ENCODE measurements at regions of chrX and their contacts with region 1.

Region 1: GRCh38 chrX:14039344-14039743 is 9.7 kb upstream of the GEMIN8 start:
- DNase-seq: peak; percentile 23 to 79 (median 45)
- ATAC-seq: peak; percentile 86
- H3K4me3 ChIP-seq: no peak overlapping the region
- H3K4me3 Mint-ChIP-seq: no peak overlapping the region
- H3K27ac ChIP-seq: no peak overlapping the region
- H3K27ac Mint-ChIP-seq: no peak overlapping the region
- H3K4me1 ChIP-seq: no peaks in the 10 kb centered on the region
- H3K4me1 Mint-ChIP-seq: no peaks in the 10 kb centered on the region
- H3K27me3 ChIP-seq: no peaks in the 10 kb centered on the region
- H3K27me3 Mint-ChIP-seq: no peaks in the 10 kb centered on the region
- CTCF ChIP-seq: peak; percentile 62

Region 2: GRCh38 chrX:13923845-13924244 is 115.5 kb before region 1 on chrX:
- CTCF ChIA-PET with region 1: no interaction called
- POLR2A ChIA-PET with region 1: no interaction called
- intact Hi-C with region 1: no loop called
- DNase-seq: no peak
- ATAC-seq: no peak
- H3K4me3 ChIP-seq: no peak overlapping the region
- H3K4me3 Mint-ChIP-seq: no peak overlapping the region
- H3K27ac ChIP-seq: no peak overlapping the region
- H3K27ac Mint-ChIP-seq: no peak overlapping the region
- H3K4me1 ChIP-seq: no peaks in the 10 kb centered on the region
- H3K4me1 Mint-ChIP-seq: no peaks in the 10 kb centered on the region
- H3K27me3 ChIP-seq: no peaks in the 10 kb centered on the region
- H3K27me3 Mint-ChIP-seq: no peaks in the 10 kb centered on the region
- CTCF ChIP-seq: no peak

Region 3: GRCh38 chrX:14528629-14529289 is 489.4 kb after region 1 on chrX:
- CTCF ChIA-PET with region 1: no interaction called
- POLR2A ChIA-PET with region 1: no interaction called
- intact Hi-C with region 1: loop called in 1 of 2 experiments (anchors 5 kb)
- DNase-seq: peak in 13 of 14 experiments; percentile 2 to 49 (median 17)
- ATAC-seq: no peak
- H3K4me3 ChIP-seq: no peak overlapping the region
- H3K4me3 Mint-ChIP-seq: no peak overlapping the region
- H3K27ac ChIP-seq: no peak overlapping the region
- H3K27ac Mint-ChIP-seq: no peak overlapping the region
- H3K4me1 ChIP-seq: no peaks in the 10 kb centered on the region
- H3K4me1 Mint-ChIP-seq: no peaks in the 10 kb centered on the region
- H3K27me3 ChIP-seq: peaks cover 0 to 3% of the 10 kb centered on the region in 2 experiments
- H3K27me3 Mint-ChIP-seq: peaks cover 8% of the 10 kb centered on the region
- CTCF ChIP-seq: no peak

Region 4: GRCh38 chrX:14673764-14674163 is 634.4 kb after region 1 on chrX:
- CTCF ChIA-PET with region 1: no interaction called
- POLR2A ChIA-PET with region 1: no interaction called
- intact Hi-C with region 1: no loop called
- DNase-seq: no peak
- ATAC-seq: no peak
- H3K4me3 ChIP-seq: no peak overlapping the region
- H3K4me3 Mint-ChIP-seq: no peak overlapping the region
- H3K27ac ChIP-seq: no peak overlapping the region
- H3K27ac Mint-ChIP-seq: no peak overlapping the region
- H3K4me1 ChIP-seq: no peaks in the 10 kb centered on the region
- H3K4me1 Mint-ChIP-seq: peaks cover 5% of the 10 kb centered on the region
- H3K27me3 ChIP-seq: no peaks in the 10 kb centered on the region
- H3K27me3 Mint-ChIP-seq: no peaks in the 10 kb centered on the region
- CTCF ChIP-seq: no peak

Region 5: GRCh38 chrX:14872851-14873675 is 833.7 kb after region 1 on chrX and contains the starts of genes FANCB and MOSPD2:
- CTCF ChIA-PET with region 1: no interaction called
- POLR2A ChIA-PET with region 1: no interaction called
- intact Hi-C with region 1: loop called in 1 of 2 experiments (anchors 5 kb)
- DNase-seq: peak; percentile 82 to 97 (median 92)
- ATAC-seq: peak; percentile 89
- H3K4me3 ChIP-seq: peak within 1 kb of the TSS; percentile 85
- H3K4me3 Mint-ChIP-seq: peak within 1 kb of the TSS; percentile 93
- H3K27ac ChIP-seq: peak within 1 kb of the TSS; percentile 71 to 72
- H3K27ac Mint-ChIP-seq: peak within 1 kb of the TSS; percentile 91
- H3K4me1 ChIP-seq: peaks cover 7% of the 10 kb centered on the region
- H3K4me1 Mint-ChIP-seq: peaks cover 8% of the 10 kb centered on the region
- H3K27me3 ChIP-seq: no peaks in the 10 kb centered on the region
- H3K27me3 Mint-ChIP-seq: no peaks in the 10 kb centered on the region
- CTCF ChIP-seq: no peak
- total RNA-seq, gene FANCB: 1.5 to 1.6 TPM
- total RNA-seq, gene MOSPD2: 6.4 to 6.8 TPM

Region 6: DNA sequence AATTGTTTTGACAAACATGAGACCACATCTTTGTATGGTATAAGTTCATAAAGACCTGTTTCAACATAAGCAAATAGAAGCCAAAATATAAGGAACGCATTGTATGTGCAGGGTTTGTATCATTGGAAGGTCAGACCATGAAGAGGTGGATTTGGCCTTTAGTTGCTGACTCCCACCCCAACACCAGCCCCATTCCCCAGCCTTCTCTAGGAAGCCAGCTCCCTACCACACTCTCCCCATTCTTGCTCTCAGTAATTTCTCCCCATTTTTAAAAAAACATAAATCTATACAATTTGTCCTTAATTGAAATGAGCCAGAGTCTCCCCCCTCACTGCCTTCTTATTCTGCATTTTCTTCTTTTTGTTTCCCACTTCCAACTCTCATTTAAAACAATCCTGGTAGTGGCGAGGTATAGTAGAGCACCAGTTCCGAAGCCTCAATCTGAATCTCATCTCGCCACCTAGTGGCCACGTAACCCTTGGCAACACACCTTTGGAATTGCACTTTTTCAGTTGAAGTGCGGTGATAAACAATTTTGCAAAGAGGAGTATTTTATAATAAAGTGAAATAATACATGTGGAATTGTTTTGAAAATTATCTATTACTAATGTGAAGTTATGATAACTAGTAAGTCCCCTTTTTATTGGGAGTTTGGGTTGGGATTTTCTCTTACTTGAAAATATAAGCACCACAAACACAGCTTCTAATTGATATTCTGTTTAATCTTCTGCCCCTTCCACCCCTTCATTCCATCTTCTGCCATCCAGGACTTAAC is 1103.9 kb after region 1 on chrX:
- CTCF ChIA-PET with region 1: no interaction called
- POLR2A ChIA-PET with region 1: no interaction called
- intact Hi-C with region 1: loop called (anchors 1 to 2 kb)
- DNase-seq: peak; percentile 16 to 74 (median 49)
- ATAC-seq: peak; percentile 68
- H3K4me3 ChIP-seq: no peak overlapping the region
- H3K4me3 Mint-ChIP-seq: no peak overlapping the region
- H3K27ac ChIP-seq: no peak overlapping the region
- H3K27ac Mint-ChIP-seq: no peak overlapping the region
- H3K4me1 ChIP-seq: peaks cover 6% of the 10 kb centered on the region
- H3K4me1 Mint-ChIP-seq: peaks cover 17% of the 10 kb centered on the region
- H3K27me3 ChIP-seq: no peaks in the 10 kb centered on the region
- H3K27me3 Mint-ChIP-seq: no peaks in the 10 kb centered on the region
- CTCF ChIP-seq: peak; percentile 69

Measured in CD4-positive, alpha-beta T cell (primary cell).